ENCODE measurements at regions of chr7 and their contacts with region 1.

Region 1: DNA sequence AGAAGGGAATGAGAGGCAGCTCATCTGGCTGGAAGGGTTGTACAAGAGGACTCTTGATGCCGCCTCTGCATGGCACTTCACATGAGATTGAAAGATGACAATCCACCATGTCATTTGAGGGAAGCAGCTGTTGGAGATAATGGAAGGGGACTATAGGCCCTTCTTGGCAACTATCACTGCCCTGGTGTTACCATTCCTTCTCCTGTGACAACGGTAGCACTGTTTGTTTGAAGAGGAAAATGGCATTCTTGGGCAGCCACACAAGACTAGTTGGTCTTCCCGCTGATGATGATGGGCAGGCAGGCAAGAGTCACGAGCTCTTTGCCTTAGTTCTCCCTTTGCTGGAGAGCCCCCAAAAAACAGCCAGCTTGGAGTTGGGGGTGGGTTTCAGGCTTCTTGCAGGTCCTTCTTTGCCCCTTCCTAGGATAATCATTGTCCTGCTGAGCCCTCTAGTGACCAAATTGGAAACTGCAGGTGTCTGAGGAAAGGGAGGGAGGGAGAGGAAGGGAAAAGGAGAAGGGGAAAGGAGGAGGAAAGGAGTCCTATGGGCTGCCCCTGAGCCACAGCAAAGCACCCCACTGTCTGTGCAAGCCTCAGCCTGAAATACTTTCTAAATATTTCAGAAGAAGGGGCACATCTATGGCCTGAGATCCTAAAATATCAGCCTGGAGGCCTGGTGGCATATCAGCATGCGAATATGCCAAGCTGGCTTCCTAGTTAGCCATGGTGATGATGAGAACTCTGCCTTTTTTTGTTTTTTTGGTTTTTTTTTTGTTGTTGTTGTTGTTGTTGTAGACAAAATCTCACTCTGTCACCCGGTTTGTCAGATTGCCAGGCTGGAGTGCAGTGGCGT is 165.6 kb upstream of the KMT2E start:
- DNase-seq: peak; percentile 64
- ATAC-seq: peak; percentile 64
- H3K4me3 Mint-ChIP-seq: no peak overlapping the region
- H3K27ac Mint-ChIP-seq: no peak overlapping the region
- H3K4me1 Mint-ChIP-seq: no peaks in the 10 kb centered on the region
- H3K27me3 Mint-ChIP-seq: peaks cover 15% of the 10 kb centered on the region
- CTCF ChIP-seq: peak; percentile 93

Region 2: GRCh38 chr7:103915680-103916357 is 932.5 kb before region 1 on chr7:
- CTCF ChIA-PET with region 1: no interaction called
- POLR2A ChIA-PET with region 1: no interaction called
- intact Hi-C with region 1: no loop called
- DNase-seq: peak; percentile 5
- ATAC-seq: peak; percentile 37
- H3K4me3 Mint-ChIP-seq: no peak overlapping the region
- H3K27ac Mint-ChIP-seq: no peak overlapping the region
- H3K4me1 Mint-ChIP-seq: no peaks in the 10 kb centered on the region
- H3K27me3 Mint-ChIP-seq: peaks cover 5% of the 10 kb centered on the region
- CTCF ChIP-seq: no peak

Region 3: DNA sequence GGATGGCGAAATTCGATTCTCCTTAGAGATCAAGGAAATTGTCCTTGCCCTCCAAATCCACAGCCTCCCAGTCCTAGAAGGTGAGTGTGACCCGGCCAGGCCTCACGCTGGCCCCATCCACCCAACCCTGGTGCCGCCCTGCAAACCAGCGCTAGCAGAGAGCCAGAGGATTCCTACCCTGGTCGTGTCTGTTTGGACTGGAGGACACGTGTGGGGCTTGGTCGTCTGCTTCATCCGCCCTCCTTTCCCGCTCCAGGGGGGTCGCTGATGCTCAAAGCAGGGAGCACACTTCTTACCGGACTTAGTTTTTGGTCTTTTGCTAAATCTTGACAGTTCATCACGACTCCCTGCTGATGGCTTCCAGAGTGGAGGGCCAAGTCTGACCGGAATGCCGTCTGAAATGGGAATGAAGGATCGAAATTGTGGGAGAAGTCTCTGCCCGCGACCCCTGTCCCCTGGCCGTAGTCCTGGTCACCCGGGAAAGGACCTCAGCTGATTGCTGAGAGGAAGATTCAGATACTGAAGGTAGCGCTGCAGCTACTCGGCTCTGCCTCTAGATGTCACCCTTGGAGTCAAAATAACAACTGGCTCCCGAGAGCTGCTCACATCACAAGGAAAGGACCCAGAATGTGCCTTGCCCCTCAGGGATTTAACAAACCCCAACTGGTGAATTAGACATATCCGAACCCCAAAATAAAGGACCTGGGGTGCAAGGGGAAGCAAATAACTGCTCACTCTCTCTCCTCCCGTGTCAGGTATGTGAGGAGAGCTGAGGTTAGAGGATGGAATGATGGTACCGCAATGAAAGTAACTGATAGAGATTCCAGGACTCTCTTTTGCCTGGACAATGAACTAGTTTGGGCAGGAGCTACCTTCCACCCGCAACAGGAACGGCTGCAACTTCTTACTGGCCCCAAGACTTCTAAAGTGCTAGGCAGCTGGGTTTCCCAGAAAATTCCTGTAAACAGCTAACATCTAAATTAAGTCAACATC is 617.0 kb before region 1 on chr7:
- CTCF ChIA-PET with region 1: interaction called, 23 read pairs
- POLR2A ChIA-PET with region 1: no interaction called
- intact Hi-C with region 1: loop called (anchors 10 kb)
- DNase-seq: peak; percentile 57
- ATAC-seq: peak; percentile 85
- H3K4me3 Mint-ChIP-seq: no peak overlapping the region
- H3K27ac Mint-ChIP-seq: no peak overlapping the region
- H3K4me1 Mint-ChIP-seq: no peaks in the 10 kb centered on the region
- H3K27me3 Mint-ChIP-seq: peaks cover 11% of the 10 kb centered on the region
- CTCF ChIP-seq: peak; percentile 85

Region 4: DNA sequence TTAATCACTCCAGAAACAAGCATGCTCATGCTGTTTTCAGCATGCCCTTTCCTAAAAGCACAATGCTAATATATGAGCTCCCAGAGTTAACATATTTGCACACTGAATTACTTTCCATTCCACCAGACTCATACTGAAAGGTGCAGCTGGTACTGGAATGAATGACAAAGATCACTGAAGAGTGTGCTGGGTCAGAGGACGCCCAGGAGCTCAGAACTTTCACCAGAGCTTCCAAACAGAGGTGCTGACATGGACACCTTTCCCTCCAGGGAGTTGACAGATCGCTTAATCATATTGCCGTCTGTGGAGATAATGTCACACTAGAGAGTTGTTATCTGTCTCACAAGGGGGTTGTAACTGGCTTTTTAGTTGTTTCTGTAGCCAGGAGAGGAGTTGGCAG is 227.0 kb before region 1 on chr7:
- CTCF ChIA-PET with region 1: no interaction called
- POLR2A ChIA-PET with region 1: no interaction called
- intact Hi-C with region 1: no loop called
- DNase-seq: no peak
- ATAC-seq: no peak
- H3K4me3 Mint-ChIP-seq: no peak overlapping the region
- H3K27ac Mint-ChIP-seq: no peak overlapping the region
- H3K4me1 Mint-ChIP-seq: no peaks in the 10 kb centered on the region
- H3K27me3 Mint-ChIP-seq: peaks cover 3% of the 10 kb centered on the region
- CTCF ChIP-seq: no peak

Region 5: GRCh38 chr7:104826135-104826534 is 22.2 kb before region 1 on chr7:
- CTCF ChIA-PET with region 1: interaction called, 10 read pairs
- POLR2A ChIA-PET with region 1: no interaction called
- intact Hi-C with region 1: no loop called
- DNase-seq: no peak
- ATAC-seq: no peak
- H3K4me3 Mint-ChIP-seq: no peak overlapping the region
- H3K27ac Mint-ChIP-seq: no peak overlapping the region
- H3K4me1 Mint-ChIP-seq: no peaks in the 10 kb centered on the region
- H3K27me3 Mint-ChIP-seq: no peaks in the 10 kb centered on the region
- CTCF ChIP-seq: no peak

Region 6: DNA sequence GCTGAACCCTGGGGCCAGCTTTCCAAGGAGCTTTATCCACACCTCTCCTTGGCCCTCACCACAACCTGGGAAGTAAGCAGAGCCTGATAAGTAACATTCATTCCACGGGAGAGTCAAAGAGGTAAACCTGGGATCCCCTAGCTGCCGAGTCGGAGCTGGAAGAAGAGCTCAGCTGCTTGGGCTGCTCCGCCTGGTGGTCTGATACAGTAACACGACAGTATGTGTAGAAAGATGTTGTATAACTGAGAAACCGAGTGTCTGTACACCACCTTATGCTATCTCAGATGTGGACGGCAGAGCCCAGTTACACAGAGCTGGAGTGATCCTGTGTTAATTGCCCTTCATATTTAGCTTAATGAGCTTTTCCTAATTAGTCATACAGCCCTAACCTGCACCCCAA is 14.4 kb after region 1 on chr7:
- CTCF ChIA-PET with region 1: interaction called, 21 read pairs
- POLR2A ChIA-PET with region 1: interaction called, 3 read pairs
- intact Hi-C with region 1: no loop called
- DNase-seq: no peak
- ATAC-seq: no peak
- H3K4me3 Mint-ChIP-seq: no peak overlapping the region
- H3K27ac Mint-ChIP-seq: no peak overlapping the region
- H3K4me1 Mint-ChIP-seq: peaks cover 10% of the 10 kb centered on the region
- H3K27me3 Mint-ChIP-seq: peaks cover 4% of the 10 kb centered on the region
- CTCF ChIP-seq: no peak